ENCODE measurements at regions of chr12 and their contacts with region 1.

Region 1: GRCh38 chr12:49288412-49288853 is 6.5 kb upstream of the PRPH start:
- DNase-seq: peak; percentile 66 to 70
- ATAC-seq: peak; percentile 47 to 66; a peak in 4 of 6 replicates
- H3K4me3 ChIP-seq: no peak overlapping the region
- H3K27ac ChIP-seq: no peak overlapping the region
- H3K4me1 ChIP-seq: 0 out of 3 replicates have a peak, but pooled peaks cover 12% of the 10 kb centered on the region
- CTCF ChIP-seq: peak; percentile 96
- EP300 ChIP-seq: no peak
- POLR2A ChIP-seq: no peak
- RAD21 ChIP-seq: peak; percentile 89 to 91

Region 2: DNA sequence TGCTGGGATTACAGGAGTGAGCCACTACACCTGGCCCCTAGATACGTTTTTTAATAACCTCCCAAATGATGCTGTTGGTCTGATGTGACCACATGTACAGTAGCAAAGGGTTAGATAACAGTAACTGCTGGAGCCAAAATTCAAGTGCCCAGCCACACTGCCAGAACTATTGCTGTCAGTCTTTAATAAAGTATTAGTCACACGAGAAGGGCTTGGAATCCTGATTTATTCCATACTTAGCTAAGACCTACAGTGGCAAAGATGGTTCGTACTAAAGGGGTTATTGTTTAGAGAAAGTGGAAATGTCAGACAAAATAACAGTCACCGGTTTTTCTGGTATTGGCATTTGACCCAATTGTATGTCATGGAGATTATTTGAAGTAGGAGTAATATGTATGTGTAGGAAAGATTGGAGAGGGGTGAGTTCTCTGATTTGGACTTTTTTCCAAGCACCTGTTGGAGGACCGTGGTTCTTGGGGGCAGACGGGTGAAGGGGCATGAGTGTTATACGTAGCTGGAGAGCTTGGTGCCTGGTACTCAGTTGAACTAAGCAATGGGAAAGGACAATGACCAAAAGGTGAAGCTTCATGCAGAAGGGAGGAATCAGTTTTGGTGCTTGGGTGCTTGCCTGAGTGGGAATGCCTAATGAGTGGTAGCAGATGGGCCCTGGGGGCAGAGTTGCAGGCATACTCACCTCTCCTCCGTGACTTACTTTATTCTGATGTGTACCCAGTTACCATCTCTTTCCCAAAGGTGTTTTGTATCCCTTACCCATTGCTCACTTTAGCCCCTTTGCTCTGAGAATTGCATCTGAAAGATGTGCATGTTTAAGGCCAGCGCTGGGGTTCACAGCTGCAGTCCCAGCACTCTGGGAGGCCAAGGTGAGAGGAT is 13.8 kb before region 1 on chr12:
- CTCF ChIA-PET with region 1: interaction called, 164 read pairs
- POLR2A ChIA-PET with region 1: interaction called, 9 read pairs
- DNase-seq: no peak
- ATAC-seq: peak; percentile 15 to 20
- H3K4me3 ChIP-seq: no peak overlapping the region
- H3K27ac ChIP-seq: no peak overlapping the region
- H3K4me1 ChIP-seq: peaks cover 14% of the 10 kb centered on the region
- CTCF ChIP-seq: no peak
- EP300 ChIP-seq: no peak
- POLR2A ChIP-seq: no peak
- RAD21 ChIP-seq: no peak

Region 3: GRCh38 chr12:49309391-49309790 is 21.0 kb after region 1 on chr12:
- CTCF ChIA-PET with region 1: interaction called, 35 read pairs
- POLR2A ChIA-PET with region 1: no interaction called
- DNase-seq: peak in 1 of 2 experiments; percentile 25
- ATAC-seq: peak in 1 of 2 experiments; percentile 59; a peak in 3 of 6 replicates
- H3K4me3 ChIP-seq: no peak overlapping the region
- H3K27ac ChIP-seq: no peak overlapping the region
- H3K4me1 ChIP-seq: 0 out of 3 replicates have a peak, but pooled peaks cover 3% of the 10 kb centered on the region
- CTCF ChIP-seq: no peak
- EP300 ChIP-seq: no peak
- POLR2A ChIP-seq: no peak
- RAD21 ChIP-seq: no peak

Region 4: DNA sequence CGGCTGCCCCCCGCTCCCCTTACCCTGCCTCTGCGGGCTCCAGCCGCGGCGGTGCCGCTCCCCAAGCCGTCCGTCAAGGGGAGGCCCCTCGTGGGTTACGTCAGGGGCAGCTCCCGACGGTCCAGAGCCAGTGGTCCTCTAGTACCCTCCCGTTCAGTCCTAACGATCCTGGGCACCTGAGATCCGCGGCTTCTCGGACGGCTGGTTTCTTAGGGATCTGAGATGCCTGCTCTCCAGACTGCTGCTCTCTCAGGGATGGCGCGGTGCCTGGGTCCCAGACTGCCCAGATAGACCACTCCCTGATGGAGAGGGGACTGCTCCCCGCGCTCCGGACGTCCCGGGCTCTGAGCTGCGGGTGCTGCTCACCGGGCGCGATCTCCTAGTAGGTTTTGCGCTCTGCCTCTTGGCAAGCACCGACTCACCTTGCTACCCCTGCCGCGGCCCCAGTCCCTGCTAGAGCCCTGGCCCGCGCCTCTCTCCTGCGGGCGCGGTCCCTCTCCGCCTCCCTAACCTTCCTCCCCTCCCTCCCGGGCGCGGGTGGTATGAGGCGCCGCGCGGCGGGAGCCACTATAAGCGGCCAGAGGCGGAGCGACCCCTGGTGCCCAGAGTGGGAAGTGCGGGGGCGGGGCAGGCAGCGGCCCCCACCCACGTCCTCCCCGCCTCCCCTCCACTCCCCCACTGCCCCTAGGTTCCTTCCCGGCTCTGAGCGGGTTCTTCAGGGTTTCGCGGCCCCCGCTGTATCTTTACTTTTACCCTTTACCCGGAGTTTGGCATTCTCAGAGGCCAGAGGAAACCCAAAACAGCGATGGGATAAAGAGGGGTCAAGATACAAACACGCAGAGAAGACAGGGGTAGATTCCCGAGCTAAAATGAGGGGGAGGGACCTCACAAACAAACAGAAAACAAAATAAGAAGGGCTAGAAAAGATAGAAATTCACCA is 48.5 kb after region 1 on chr12 and contains the start of gene C1QL4:
- CTCF ChIA-PET with region 1: interaction called, 164 read pairs
- POLR2A ChIA-PET with region 1: no interaction called
- DNase-seq: peak; percentile 75 to 84
- ATAC-seq: peak; percentile 78 to 88
- H3K4me3 ChIP-seq: peak within 1 kb of the TSS; percentile 64
- H3K27ac ChIP-seq: peak within 1 kb of the TSS; percentile 71 to 82
- H3K4me1 ChIP-seq: peaks cover 12% of the 10 kb centered on the region; the same call in 2 of the 3 replicates
- CTCF ChIP-seq: peak; percentile 95
- EP300 ChIP-seq: no peak
- POLR2A ChIP-seq: peak; percentile 62
- RAD21 ChIP-seq: peak; percentile 28 to 53
- polyA plus RNA-seq, gene C1QL4: 0.99 and 1.5 TPM in 2 replicates